Activated CD8-positive, alpha-beta T cell treated with anti-CD3 and anti-CD28 coated beads, Interleukin-2, amount 10 ng/mL, durations not matched to agents 7 days and 5 days (primary cell): ENCODE measurements at regions of chr5 and their contacts with region 1.

Region 1: DNA sequence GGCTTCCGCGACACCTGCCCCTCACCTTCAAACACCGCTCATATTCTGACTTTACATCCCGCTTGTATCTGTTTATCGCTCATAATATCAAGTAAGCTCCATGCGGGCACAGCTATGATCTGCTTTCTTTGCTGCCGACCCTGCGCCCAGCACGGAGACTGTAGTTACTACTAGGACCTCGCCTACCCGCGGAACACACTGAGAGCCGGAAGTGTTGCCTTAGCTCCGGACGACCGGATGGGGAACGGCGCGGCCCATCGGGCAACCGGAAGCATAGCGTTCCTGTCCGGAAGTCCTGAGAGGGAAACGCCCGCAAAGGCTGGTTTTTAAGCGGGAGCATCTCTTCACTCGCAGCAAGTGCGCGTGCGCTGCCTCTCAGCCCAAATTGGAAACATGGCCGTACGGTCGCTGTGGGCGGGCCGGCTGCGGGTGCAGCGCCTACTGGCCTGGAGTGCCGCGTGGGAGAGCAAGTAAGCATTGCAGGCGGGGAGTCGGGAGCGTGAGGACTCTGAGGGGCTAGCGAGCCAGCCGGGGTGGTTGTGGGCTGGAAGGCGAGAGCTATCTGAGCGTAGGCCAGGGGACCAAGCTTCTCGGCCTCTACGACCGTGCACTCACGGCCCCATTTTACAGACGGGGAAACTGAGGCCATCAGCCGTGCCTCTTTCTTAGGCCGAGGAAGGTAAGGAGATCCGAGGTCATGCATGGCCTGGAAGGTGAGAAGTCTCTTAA is at the start of gene GRPEL2:
- DNase-seq: peak; percentile 95
- ATAC-seq: peak; percentile 84
- H3K4me3 Mint-ChIP-seq: peak within 1 kb of the TSS; percentile 83
- H3K27ac Mint-ChIP-seq: peak within 1 kb of the TSS; percentile 88
- H3K4me1 Mint-ChIP-seq: peaks cover 58% of the 10 kb centered on the region
- H3K27me3 Mint-ChIP-seq: no peaks in the 10 kb centered on the region
- total RNA-seq, gene GRPEL2: 29.9 to 30.0 TPM

Region 2: DNA sequence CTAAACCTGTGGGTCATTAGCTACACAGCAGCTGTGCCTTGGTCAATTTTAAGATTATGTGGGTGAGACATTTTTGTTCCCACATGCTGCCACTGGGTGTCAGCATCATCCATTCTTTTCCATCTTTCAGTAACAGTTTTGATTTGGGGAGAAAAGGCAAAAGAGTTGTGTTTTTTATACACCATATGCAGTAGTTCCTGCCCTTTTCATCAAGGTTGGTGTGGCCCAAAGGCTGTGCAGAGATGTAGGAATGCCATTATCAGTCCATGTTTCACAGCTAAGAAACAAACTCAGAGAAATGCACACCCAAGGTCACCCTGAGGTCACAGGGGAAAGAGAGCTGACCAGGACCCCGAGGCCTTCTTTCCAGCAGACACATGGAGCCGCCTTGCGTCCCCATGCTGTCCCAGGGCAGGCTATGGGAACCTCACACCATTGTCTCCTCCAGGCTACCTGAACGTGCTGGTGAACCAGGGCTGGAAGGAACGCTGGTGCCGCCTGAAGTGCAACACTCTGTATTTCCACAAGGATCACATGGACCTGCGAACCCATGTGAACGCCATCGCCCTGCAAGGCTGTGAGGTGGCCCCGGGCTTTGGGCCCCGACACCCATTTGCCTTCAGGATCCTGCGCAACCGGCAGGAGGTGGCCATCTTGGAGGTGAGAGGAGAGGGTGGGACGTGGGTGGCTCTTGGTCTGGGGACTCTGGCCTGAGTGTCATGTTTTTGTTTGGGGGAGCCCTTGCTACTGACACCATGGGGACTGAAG is 27.8 kb before region 1 on chr5:
- CTCF ChIA-PET with region 1: interaction called, 15 read pairs
- POLR2A ChIA-PET with region 1: interaction called, 3 read pairs
- DNase-seq: peak; percentile 48
- ATAC-seq: peak; percentile 55
- H3K4me3 Mint-ChIP-seq: no peak overlapping the region
- H3K27ac Mint-ChIP-seq: no peak overlapping the region
- H3K4me1 Mint-ChIP-seq: no peaks in the 10 kb centered on the region
- H3K27me3 Mint-ChIP-seq: no peaks in the 10 kb centered on the region

Region 3: GRCh38 chr5:149325166-149325735 is 20.1 kb before region 1 on chr5:
- CTCF ChIA-PET with region 1: interaction called, 15 read pairs
- POLR2A ChIA-PET with region 1: interaction called, 3 read pairs
- DNase-seq: no peak
- ATAC-seq: no peak
- H3K4me3 Mint-ChIP-seq: no peak overlapping the region
- H3K27ac Mint-ChIP-seq: no peak overlapping the region
- H3K4me1 Mint-ChIP-seq: no peaks in the 10 kb centered on the region
- H3K27me3 Mint-ChIP-seq: no peaks in the 10 kb centered on the region

Region 4: GRCh38 chr5:149357370-149358293 is 12.3 kb after region 1 on chr5 and contains the start of gene PCYOX1L:
- CTCF ChIA-PET with region 1: interaction called, 26 read pairs
- POLR2A ChIA-PET with region 1: interaction called, 57 read pairs
- DNase-seq: peak; percentile 95
- ATAC-seq: peak; percentile 99
- H3K4me3 Mint-ChIP-seq: peak within 1 kb of the TSS; percentile 97
- H3K27ac Mint-ChIP-seq: peak within 1 kb of the TSS; percentile 91
- H3K4me1 Mint-ChIP-seq: peaks cover 74% of the 10 kb centered on the region
- H3K27me3 Mint-ChIP-seq: no peaks in the 10 kb centered on the region
- total RNA-seq, gene PCYOX1L: 33.9 to 35.0 TPM

Region 5: DNA sequence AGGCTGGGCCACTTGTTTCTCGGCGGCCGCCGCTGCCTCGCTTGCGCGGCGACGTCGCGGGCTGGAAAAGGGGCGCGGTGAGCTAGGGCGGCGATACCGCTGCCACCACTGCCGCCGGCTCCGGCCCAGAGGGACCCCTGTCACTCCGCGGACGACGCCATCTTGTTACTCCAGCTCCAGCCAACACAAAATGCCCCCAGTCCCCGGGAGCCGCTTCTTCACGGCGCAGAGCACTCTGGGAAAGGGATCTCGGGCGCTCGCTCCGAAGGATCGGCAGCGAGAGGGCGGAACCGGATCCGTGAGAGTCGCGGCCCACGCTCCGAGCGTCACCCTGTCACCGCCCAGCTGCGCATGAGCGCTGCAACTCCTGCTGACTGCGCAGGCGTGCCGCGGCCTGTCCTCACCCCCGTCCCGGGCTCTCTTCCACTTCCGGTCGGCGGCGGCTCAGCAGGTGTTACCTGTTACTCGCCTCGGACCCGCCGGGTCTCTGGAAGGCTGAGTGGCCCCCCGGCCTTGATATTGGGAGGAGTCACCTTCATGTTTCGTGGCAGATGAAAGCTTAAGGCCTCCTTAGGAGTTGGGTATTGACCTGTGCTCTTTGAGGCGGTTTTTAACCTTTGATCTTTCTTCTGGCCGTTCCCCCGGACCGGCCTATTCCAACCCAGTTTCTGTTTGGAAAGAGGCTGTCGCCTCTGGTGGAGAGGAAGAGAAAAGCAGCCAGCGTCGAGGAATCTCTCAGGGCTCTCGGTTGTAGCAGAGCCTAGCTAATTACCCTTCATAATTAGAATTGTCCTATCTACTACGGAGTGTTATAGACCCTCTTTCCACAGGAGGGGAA is 206.1 kb after region 1 on chr5 and contains the start of gene CSNK1A1:
- CTCF ChIA-PET with region 1: interaction called, 6 read pairs
- POLR2A ChIA-PET with region 1: interaction called, 26 read pairs
- DNase-seq: peak; percentile 99
- ATAC-seq: peak; percentile 93
- H3K4me3 Mint-ChIP-seq: peak within 1 kb of the TSS; percentile 96
- H3K27ac Mint-ChIP-seq: peak within 1 kb of the TSS; percentile 99
- H3K4me1 Mint-ChIP-seq: peaks cover 33% of the 10 kb centered on the region
- H3K27me3 Mint-ChIP-seq: no peaks in the 10 kb centered on the region
- total RNA-seq, gene CSNK1A1: 163 to 177 TPM

Region 6: DNA sequence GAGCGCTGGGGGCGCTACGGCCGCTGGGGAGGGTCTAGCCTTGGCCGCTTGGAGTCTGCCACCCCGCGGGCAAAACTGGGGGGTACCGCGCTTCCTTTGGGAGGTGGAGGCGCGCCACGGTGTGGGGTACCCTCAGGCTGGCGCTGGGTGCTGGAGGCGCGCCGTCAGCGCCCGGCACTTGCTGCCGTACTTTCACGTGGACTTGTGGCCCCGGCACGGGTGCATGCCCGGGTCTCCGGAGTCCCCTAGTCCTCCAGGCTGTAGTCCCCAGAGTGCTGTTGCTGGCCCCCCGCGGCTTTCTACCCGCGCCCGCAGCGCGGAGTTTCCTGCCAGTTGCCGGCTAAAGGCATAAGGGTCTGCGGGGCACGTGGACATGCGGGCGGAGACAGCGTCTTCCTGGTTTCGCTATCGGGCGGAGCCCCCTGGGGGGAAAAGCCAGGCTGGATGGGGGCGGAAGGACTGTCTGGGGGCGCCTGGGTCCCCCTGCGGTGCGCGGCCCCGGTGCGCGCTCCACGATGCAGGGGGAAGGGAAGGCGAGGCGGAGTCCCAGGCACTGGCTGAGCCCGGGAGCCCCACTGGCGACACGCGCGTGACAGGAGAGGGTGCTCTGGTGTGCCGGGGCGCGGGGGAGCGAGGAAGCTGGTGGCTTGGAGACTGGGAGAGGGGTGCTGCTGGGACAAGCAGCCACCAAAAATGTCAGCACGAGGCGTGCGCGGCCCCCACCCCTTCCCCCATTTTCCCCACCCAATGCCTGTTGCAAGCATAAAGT is 385.5 kb after region 1 on chr5:
- CTCF ChIA-PET with region 1: no interaction called
- POLR2A ChIA-PET with region 1: no interaction called
- DNase-seq: peak; percentile 76
- ATAC-seq: peak; percentile 61
- H3K4me3 Mint-ChIP-seq: peak overlapping the region; percentile 83
- H3K27ac Mint-ChIP-seq: peak overlapping the region; percentile 87
- H3K4me1 Mint-ChIP-seq: peaks cover 16% of the 10 kb centered on the region
- H3K27me3 Mint-ChIP-seq: no peaks in the 10 kb centered on the region